PC-3 (cell line): ENCODE measurements at regions of chr4 and their contacts with region 1.

Region 1: DNA sequence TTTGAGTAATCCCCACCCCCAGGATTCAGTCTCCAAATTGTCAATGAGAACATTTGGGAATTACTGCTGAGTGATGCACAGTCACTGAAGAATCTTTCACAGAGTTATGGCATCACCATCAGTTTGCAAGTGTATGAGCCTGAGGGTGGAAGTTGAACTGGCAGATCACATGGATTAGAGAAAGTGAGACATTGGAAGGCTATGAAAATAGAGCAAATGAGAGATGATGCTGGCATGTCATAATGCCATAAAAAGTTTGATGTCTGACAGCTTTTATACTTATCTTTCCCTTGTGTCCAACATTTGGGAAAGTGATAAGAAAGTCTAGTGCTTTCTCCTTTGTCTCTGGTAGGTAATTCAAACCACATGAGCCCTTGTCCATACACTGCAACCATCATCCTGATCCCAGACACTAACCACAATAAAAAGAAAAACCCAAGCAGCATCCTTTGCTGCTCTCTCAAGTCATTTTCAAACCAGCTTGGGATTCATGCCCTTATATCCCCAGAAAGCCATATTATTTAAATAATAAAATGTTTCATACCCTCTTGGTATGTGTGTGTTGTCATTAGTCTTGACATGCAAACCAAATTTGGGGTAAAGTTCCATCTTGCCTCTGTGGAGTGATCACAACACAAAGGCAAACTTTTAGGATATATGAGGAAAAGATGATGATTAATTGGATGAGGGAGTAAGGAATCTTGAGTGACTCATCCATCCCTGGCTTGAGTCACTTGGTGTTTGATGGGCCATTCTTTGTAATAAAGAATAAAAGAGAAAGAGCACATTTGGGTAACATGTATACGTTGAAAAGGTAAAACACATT is 438.9 kb downstream of the GRXCR1 start:
- DNase-seq: peak; percentile 89
- ATAC-seq: peak; percentile 68
- H3K4me3 ChIP-seq: peak overlapping the region; percentile 30; the same call in 1 of the 2 replicates
- H3K27ac ChIP-seq: peak overlapping the region; percentile 98
- H3K4me1 ChIP-seq: peaks cover 38% of the 10 kb centered on the region
- H3K27me3 ChIP-seq: no peaks in the 10 kb centered on the region
- CTCF ChIP-seq: no peak

Region 2: GRCh38 chr4:43244688-43245382 is 86.6 kb before region 1 on chr4:
- CTCF ChIA-PET with region 1: no interaction called
- POLR2A ChIA-PET with region 1: no interaction called
- intact Hi-C with region 1: no loop called
- DNase-seq: no peak
- ATAC-seq: no peak
- H3K4me3 ChIP-seq: no peak overlapping the region
- H3K27ac ChIP-seq: no peak overlapping the region
- H3K4me1 ChIP-seq: no peaks in the 10 kb centered on the region
- H3K27me3 ChIP-seq: no peaks in the 10 kb centered on the region
- CTCF ChIP-seq: no peak

Region 3: GRCh38 chr4:43351970-43352806 is 20.7 kb after region 1 on chr4:
- CTCF ChIA-PET with region 1: no interaction called
- POLR2A ChIA-PET with region 1: no interaction called
- intact Hi-C with region 1: loop called (anchors 2 kb)
- DNase-seq: peak; percentile 71
- ATAC-seq: peak; percentile 84
- H3K4me3 ChIP-seq: no peak overlapping the region
- H3K27ac ChIP-seq: peak overlapping the region; percentile 36
- H3K4me1 ChIP-seq: peaks cover 27% of the 10 kb centered on the region
- H3K27me3 ChIP-seq: no peaks in the 10 kb centered on the region
- CTCF ChIP-seq: no peak